Dendritic cell treated with granulocyte-macrophage colony-stimulating factor and Interleukin-4, amounts not matched to agents 40 ng/mL and 50 ng/mL, for 4 days (primary cell): ENCODE measurements at regions of chr2 and their contacts with region 1.

Region 1: DNA sequence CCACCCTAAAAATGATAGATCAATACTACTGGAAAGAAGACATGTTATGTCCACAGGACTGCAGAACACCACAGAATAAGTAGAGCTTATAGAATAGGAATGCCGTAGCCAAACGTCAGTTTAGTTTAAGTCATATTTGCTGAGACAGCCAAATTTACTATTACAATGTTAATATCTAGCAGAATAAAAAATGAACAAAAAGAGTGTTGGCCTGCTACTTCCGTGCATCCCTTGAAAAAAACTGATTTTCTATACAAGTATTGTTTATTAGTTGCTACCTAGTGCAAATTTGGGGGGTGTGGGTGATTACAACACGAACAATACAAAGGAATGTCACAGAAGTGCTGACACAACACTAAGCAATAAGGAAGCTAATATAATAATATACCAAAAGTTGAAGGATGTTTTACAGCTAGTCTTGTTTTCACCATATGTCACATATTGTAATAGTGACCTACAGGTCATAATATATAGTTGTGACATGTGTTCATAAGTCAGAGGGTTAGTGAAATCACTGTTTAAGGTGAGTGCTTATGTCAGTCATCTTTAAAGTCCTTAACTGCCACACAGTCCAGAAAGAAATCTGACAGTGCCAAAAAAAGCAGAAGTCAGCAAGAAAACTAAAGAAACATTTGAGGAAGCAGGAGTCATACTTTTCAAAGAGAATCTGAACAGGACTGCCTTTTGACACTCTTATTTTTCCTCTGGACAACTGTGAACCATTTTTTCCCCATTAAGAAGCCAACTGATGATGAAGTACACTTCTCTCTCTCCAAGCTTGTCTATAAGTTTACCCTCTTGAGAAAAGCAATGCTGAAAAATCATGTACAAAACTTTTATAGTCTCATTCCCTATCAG is 376.4 kb downstream of the ZEB2 start:
- H3K4me3 Mint-ChIP-seq: peak overlapping the region; percentile 21
- H3K27ac Mint-ChIP-seq: peak overlapping the region; percentile 95
- H3K4me1 Mint-ChIP-seq: peaks cover 47% of the 10 kb centered on the region
- H3K27me3 Mint-ChIP-seq: no peaks in the 10 kb centered on the region

Region 2: GRCh38 chr2:144099746-144100438 is 43.6 kb before region 1 on chr2:
- intact Hi-C with region 1: no loop called
- H3K4me3 Mint-ChIP-seq: no peak overlapping the region
- H3K27ac Mint-ChIP-seq: no peak overlapping the region
- H3K4me1 Mint-ChIP-seq: peaks cover 11% of the 10 kb centered on the region
- H3K27me3 Mint-ChIP-seq: no peaks in the 10 kb centered on the region

Region 3: DNA sequence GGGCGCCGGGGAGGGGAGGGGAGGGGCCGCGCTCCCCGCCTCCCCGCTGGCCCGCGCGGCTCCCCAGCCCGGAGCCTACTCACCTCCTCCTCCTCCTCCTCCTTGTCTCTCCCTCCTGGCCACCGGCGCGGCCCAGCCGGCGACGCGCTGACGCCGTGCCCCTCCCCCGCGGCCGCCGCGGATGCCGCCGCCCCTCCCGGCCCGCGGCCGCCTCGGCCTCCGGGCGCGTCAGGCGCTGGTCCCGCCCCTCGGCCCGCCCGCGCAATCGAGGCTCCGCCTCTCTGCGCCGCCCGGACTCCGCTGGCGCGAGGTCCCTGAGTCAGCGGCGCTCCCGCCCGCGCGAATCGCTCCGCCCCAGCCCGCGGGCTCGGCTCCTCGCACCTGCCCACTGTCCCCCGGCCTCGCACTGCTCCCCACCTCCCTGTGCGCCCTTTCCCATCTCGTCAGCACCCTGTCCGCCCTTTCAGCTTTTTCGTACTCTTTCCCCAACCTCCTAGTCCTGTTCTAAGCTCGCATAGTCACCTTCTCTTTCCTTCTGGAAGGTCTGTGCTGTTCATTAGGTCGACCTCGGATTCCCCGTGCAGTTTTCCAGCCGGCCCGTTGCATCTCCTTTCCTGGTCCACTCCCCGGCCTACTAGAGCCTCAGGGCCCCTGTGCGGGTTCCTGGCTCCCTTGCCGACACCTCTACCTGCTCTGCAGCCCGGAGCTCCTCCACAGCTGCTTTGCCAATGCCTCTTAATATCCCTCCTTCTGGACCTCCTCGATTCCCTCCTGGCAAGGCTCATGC is 189.0 kb after region 1 on chr2:
- intact Hi-C with region 1: loop called (anchors 5 kb)
- H3K4me3 Mint-ChIP-seq: peak overlapping the region; percentile 89
- H3K27ac Mint-ChIP-seq: peak overlapping the region; percentile 88
- H3K4me1 Mint-ChIP-seq: peaks cover 19% of the 10 kb centered on the region
- H3K27me3 Mint-ChIP-seq: peaks cover 9% of the 10 kb centered on the region

Region 4: DNA sequence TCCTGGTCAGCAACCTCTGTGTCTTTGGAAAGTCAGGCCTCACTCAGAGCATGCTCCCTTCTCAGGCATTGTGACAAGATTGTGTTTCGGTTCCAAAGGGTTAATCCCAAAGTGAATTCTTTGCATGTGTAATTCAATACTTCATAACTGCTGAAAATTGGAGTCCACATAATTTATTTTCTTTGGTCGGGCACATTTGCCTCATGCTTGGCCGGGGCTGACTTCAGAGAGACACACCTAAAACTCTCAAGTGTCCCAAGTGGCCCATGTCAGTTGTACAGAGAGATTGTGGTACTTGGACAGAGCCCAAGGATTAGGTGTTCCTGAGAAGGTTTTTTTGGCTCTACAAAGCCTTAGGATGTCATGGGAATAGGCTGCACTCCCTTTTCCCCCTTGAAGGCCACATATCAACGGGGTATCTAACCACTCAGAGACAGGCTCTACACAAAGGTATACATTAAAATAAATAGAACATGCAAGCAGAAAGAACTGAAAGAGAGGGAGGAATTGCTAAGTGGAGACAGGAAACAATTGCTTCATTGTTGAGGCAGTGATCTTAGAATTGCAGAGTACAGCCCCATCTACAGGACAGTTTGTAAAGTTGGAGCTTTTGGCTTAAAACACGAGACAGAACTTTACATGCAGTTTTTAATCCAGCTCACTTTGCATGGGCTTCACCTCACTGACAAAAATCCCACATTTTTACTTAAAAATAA is 1608.7 kb after region 1 on chr2:
- intact Hi-C with region 1: loop called (anchors 10 kb)
- H3K4me3 Mint-ChIP-seq: peak overlapping the region; percentile 53
- H3K27ac Mint-ChIP-seq: peak overlapping the region; percentile 82
- H3K4me1 Mint-ChIP-seq: peaks cover 49% of the 10 kb centered on the region
- H3K27me3 Mint-ChIP-seq: no peaks in the 10 kb centered on the region